Right lobe of liver (tissue), 6 donors: ENCODE measurements at regions of chr5 and their contacts with region 1.

Region 1: GRCh38 chr5:77015938-77016569 is 14.2 kb upstream of the AGGF1 start:
- DNase-seq: no peak
- ATAC-seq: peak; percentile 74 to 86 (median 78)
- H3K4me3 ChIP-seq: no peak overlapping the region
- H3K27ac ChIP-seq: no peak overlapping the region
- H3K4me1 ChIP-seq: peaks cover 0 to 11% (median 2%) of the 10 kb centered on the region in 4 donors
- H3K27me3 ChIP-seq: no peaks in the 10 kb centered on the region
- CTCF ChIP-seq: peak; percentile 42 to 67 (median 50)
- POLR2A ChIP-seq: no peak

Region 2: GRCh38 chr5:76867827-76868693 is 148.0 kb before region 1 on chr5:
- intact Hi-C with region 1: loop called (anchors 10 kb)
- DNase-seq: peak in 2 of 3 donors; percentile 41 to 64
- ATAC-seq: peak; percentile 96 to 98 (median 98)
- H3K4me3 ChIP-seq: no peak overlapping the region
- H3K27ac ChIP-seq: no peak overlapping the region
- H3K4me1 ChIP-seq: no peaks in the 10 kb centered on the region
- H3K27me3 ChIP-seq: no peaks in the 10 kb centered on the region
- CTCF ChIP-seq: peak; percentile 80 to 97 (median 90)
- POLR2A ChIP-seq: no peak

Region 3: DNA sequence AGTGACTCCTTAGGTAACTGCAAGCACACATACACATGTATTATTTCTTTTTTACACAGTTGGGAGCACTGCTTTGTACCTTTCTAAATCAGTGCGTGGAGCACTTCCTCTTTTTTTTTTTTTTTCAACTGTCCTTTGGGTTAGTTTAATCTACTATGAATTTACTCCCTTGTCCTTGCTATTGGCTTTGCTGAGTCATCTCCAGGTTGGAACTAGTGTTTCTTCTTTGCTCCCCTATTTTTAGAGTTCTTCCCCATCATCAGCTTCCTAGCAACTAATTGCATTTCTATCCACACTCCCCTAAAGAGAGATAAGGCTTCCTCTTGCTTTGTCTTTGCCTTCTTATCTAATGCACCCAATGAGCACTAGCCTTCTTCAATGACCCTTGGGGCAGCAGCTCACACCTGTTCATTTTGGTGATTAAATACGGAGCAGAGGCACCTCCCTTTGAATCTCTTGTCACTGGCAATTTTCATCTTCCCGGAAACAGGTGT is 141.9 kb before region 1 on chr5:
- intact Hi-C with region 1: loop called (anchors 10 kb)
- DNase-seq: no peak
- ATAC-seq: peak in 2 of 4 donors; percentile 15 to 45
- H3K4me3 ChIP-seq: no peak overlapping the region
- H3K27ac ChIP-seq: no peak overlapping the region
- H3K4me1 ChIP-seq: no peaks in the 10 kb centered on the region
- H3K27me3 ChIP-seq: no peaks in the 10 kb centered on the region
- CTCF ChIP-seq: no peak
- POLR2A ChIP-seq: no peak

Region 4: GRCh38 chr5:76971516-76971915 is 44.5 kb before region 1 on chr5:
- intact Hi-C with region 1: no loop called
- DNase-seq: no peak
- ATAC-seq: no peak
- H3K4me3 ChIP-seq: no peak overlapping the region
- H3K27ac ChIP-seq: no peak overlapping the region
- H3K4me1 ChIP-seq: no peaks in the 10 kb centered on the region
- H3K27me3 ChIP-seq: no peaks in the 10 kb centered on the region
- CTCF ChIP-seq: no peak
- POLR2A ChIP-seq: no peak